Activated CD4-positive, alpha-beta T cell treated with anti-CD3 and anti-CD28 coated beads for 36 hours (primary cell): ENCODE measurements at regions of chr11 and their contacts with region 1.

Region 1: GRCh38 chr11:96284917-96285316 is 58.1 kb downstream of the MAML2 start:
- DNase-seq: no peak
- ATAC-seq: peak; percentile 74
- H3K4me3 Mint-ChIP-seq: no peak overlapping the region
- H3K27ac Mint-ChIP-seq: peak overlapping the region; percentile 48
- H3K4me1 Mint-ChIP-seq: peaks cover 86% of the 10 kb centered on the region
- H3K27me3 Mint-ChIP-seq: no peaks in the 10 kb centered on the region

Region 2: GRCh38 chr11:96267496-96268032 is 17.4 kb before region 1 on chr11:
- CTCF ChIA-PET with region 1: no interaction called
- POLR2A ChIA-PET with region 1: no interaction called
- intact Hi-C with region 1: loop called in 1 of 2 experiments (anchors 2 kb)
- DNase-seq: peak; percentile 69
- ATAC-seq: peak; percentile 94
- H3K4me3 Mint-ChIP-seq: peak overlapping the region; percentile 20
- H3K27ac Mint-ChIP-seq: peak overlapping the region; percentile 93
- H3K4me1 Mint-ChIP-seq: peaks cover 82% of the 10 kb centered on the region
- H3K27me3 Mint-ChIP-seq: no peaks in the 10 kb centered on the region

Region 3: DNA sequence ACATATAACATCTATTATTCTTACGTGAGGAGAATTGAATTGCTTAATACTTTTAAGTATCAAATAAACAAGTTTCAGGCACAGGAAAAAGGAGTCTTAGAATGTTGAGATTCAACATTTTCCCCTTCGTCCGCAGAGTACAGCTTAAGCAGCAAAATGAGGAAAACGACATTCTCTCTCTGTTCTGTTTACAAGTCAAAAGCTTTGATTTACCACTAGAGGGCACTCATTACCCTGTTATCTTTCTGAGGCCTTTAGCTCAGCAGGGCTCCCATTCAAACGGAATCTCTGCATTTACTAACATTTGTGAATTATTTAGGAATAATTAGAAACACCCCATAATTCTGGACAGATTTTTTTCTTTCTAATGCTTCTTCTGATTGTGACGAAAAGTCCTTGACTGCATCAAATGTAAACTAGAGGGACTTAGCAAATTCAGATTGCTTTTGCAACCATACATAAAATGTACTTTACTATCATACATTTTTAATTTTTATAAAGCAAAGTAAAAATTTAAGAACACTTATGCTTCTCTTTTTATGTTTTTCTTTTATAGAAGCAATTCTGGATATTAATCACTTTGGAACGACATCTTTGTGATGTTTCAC is 179.9 kb after region 1 on chr11:
- CTCF ChIA-PET with region 1: no interaction called
- POLR2A ChIA-PET with region 1: no interaction called
- intact Hi-C with region 1: no loop called
- DNase-seq: no peak
- ATAC-seq: peak; percentile 74
- H3K4me3 Mint-ChIP-seq: no peak overlapping the region
- H3K27ac Mint-ChIP-seq: no peak overlapping the region
- H3K4me1 Mint-ChIP-seq: peaks cover 3% of the 10 kb centered on the region
- H3K27me3 Mint-ChIP-seq: peaks cover 5% of the 10 kb centered on the region